Activated B cell treated with CpG ODN at 0.5 μM for 24 hours (primary cell): ENCODE measurements at regions of chr3 and their contacts with region 1.

Region 1: DNA sequence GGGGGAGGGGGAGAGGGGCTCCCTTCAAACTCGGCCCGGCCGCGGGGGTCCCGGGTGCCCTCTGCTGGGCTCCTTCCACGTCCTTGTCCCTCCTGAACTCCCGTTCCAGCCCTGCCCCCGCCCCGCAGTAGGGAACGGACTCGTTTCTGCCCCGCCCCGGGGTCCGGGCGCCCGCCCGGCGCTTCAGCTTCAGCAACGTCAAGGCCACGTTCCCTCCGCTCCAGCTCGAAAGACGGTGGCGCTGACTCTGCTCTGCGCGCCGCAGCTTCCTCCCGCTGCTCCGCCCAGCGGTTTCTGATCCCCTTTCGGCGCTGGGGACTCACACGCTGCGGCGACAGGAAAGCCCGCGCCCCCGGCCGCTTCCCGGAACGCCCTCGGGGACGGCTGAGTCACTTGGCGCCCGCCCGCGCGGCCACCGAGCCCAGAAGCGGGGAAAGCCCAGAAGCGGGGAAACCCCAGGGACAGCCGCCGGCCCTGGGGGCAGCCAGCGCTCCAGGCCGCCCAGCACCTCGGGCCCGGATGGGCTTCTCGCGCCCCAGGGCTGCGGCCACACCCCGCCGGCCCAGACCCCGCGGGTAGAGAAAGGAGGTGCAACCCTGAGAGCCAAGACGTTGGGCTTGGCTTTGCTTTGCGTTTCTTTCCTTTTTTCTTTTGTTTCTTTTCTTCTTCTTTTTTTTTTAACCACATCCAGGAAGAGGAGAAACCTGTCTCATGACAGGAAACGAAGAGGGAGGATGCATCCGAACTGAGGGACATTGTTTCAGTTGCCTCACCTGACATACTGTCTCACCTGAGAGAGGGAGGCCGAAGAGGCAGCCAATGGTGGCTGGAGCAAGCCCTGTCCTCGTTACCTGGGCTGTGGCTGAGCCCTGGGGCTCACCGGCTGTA is 28.9 kb downstream of the ARHGAP31 start:
- DNase-seq: peak; percentile 96
- ATAC-seq: peak; percentile 87
- H3K4me3 Mint-ChIP-seq: peak overlapping the region; percentile 87
- H3K27ac Mint-ChIP-seq: peak overlapping the region; percentile 94
- H3K4me1 Mint-ChIP-seq: peaks cover 59% of the 10 kb centered on the region
- H3K27me3 Mint-ChIP-seq: no peaks in the 10 kb centered on the region
- CTCF ChIP-seq: no peak

Region 2: DNA sequence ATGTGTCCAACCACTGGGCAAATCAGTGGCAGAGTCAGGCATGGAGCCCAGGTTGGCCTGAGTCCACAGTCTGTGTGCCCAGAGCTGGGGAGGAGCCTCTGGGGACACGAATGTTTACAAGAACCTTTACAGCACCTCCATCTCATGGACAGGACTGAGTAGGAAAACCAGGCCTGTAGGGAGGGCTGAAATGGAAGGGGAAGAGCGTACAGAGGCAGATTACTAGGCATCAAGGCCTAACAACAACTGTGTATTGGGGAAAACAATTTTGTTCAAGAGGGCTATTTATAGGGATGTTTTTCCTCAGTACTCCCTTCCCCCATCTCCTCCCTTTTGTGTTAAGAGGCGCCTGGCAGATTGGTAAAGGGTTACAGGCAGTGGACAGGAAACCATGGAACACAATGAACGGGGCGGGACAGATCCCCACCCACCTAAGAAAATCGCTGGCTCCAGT is 44.0 kb before region 1 on chr3:
- CTCF ChIA-PET with region 1: no interaction called
- POLR2A ChIA-PET with region 1: no interaction called
- intact Hi-C with region 1: loop called (anchors 5 kb)
- DNase-seq: no peak
- ATAC-seq: no peak
- H3K4me3 Mint-ChIP-seq: no peak overlapping the region
- H3K27ac Mint-ChIP-seq: no peak overlapping the region
- H3K4me1 Mint-ChIP-seq: peaks cover 3% of the 10 kb centered on the region
- H3K27me3 Mint-ChIP-seq: no peaks in the 10 kb centered on the region
- CTCF ChIP-seq: no peak

Region 3: DNA sequence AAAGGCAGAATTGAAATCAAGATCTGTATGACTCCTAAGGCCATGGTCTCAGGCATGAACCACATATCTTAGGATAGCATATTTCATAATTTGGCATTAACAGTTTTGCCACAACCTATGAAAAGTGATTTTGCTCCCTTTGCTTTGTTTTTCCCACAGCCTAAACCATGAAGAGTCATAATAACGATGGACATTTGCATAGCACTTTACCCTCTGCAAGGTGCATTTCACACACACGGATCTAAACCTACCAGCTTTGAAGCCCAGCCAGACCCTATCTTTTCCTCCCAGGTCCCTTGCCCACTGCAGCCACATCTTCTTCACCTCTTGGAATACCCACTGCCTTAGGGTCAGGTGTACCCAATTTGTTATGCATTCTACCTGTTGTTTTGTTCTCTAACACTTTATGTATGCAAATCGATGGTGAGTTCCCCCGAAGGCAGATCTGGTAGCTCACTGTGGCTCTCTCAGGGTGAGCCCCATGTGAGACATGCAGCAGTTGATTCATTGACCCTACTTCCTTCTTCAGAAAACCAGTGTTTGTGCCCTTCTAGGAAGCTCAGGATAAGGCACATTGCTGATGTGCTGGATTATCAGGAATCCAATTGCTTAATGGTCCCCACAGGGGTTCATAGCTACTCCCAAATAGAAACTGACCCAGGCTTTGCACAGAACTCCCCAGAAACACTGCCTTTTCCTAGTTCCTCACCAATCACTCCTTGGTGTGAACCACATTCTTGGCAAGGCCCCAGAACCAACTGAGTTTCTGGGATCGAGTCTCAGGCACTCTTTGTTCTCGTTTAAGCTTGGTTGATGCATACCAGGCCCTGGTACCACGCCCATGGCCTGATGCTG is 20.2 kb before region 1 on chr3:
- CTCF ChIA-PET with region 1: interaction called, 4 read pairs
- POLR2A ChIA-PET with region 1: interaction called, 13 read pairs
- intact Hi-C with region 1: no loop called
- DNase-seq: no peak
- ATAC-seq: peak; percentile 69
- H3K4me3 Mint-ChIP-seq: peak overlapping the region; percentile 11
- H3K27ac Mint-ChIP-seq: peak overlapping the region; percentile 78
- H3K4me1 Mint-ChIP-seq: peaks cover 51% of the 10 kb centered on the region
- H3K27me3 Mint-ChIP-seq: no peaks in the 10 kb centered on the region
- CTCF ChIP-seq: no peak

Region 4: GRCh38 chr3:119352849-119353502 is 29.9 kb after region 1 on chr3:
- CTCF ChIA-PET with region 1: interaction called, 4 read pairs
- POLR2A ChIA-PET with region 1: interaction called, 20 read pairs
- intact Hi-C with region 1: loop called (anchors 1 kb)
- DNase-seq: no peak
- ATAC-seq: peak; percentile 46
- H3K4me3 Mint-ChIP-seq: peak overlapping the region; percentile 41
- H3K27ac Mint-ChIP-seq: peak overlapping the region; percentile 47
- H3K4me1 Mint-ChIP-seq: peaks cover 47% of the 10 kb centered on the region
- H3K27me3 Mint-ChIP-seq: no peaks in the 10 kb centered on the region
- CTCF ChIP-seq: no peak

Region 5: GRCh38 chr3:119376758-119377157 is 53.7 kb after region 1 on chr3:
- CTCF ChIA-PET with region 1: no interaction called
- POLR2A ChIA-PET with region 1: no interaction called
- intact Hi-C with region 1: no loop called
- DNase-seq: no peak
- ATAC-seq: no peak
- H3K4me3 Mint-ChIP-seq: no peak overlapping the region
- H3K27ac Mint-ChIP-seq: no peak overlapping the region
- H3K4me1 Mint-ChIP-seq: peaks cover 10% of the 10 kb centered on the region
- H3K27me3 Mint-ChIP-seq: no peaks in the 10 kb centered on the region
- CTCF ChIP-seq: no peak

Region 6: GRCh38 chr3:119498186-119498987 is 175.3 kb after region 1 on chr3 and contains the start of gene TIMMDC1:
- CTCF ChIA-PET with region 1: no interaction called
- POLR2A ChIA-PET with region 1: interaction called, 9 read pairs
- intact Hi-C with region 1: loop called (anchors 1 kb)
- DNase-seq: peak; percentile 96
- ATAC-seq: peak; percentile 98
- H3K4me3 Mint-ChIP-seq: peak within 1 kb of the TSS; percentile 99
- H3K27ac Mint-ChIP-seq: peak within 1 kb of the TSS; percentile 97
- H3K4me1 Mint-ChIP-seq: peaks cover 38% of the 10 kb centered on the region
- H3K27me3 Mint-ChIP-seq: no peaks in the 10 kb centered on the region
- CTCF ChIP-seq: no peak
- total RNA-seq, gene TIMMDC1: 73.0 and 76.1 TPM in 2 replicates

Region 7: GRCh38 chr3:119702530-119703157 is 379.6 kb after region 1 on chr3 and contains the start of gene CFAP91:
- CTCF ChIA-PET with region 1: no interaction called
- POLR2A ChIA-PET with region 1: no interaction called
- intact Hi-C with region 1: loop called (anchors 1 kb)
- DNase-seq: peak; percentile 86
- ATAC-seq: peak; percentile 92
- H3K4me3 Mint-ChIP-seq: peak within 1 kb of the TSS; percentile 86
- H3K27ac Mint-ChIP-seq: peak within 1 kb of the TSS; percentile 72
- H3K4me1 Mint-ChIP-seq: peaks cover 52% of the 10 kb centered on the region
- H3K27me3 Mint-ChIP-seq: no peaks in the 10 kb centered on the region
- CTCF ChIP-seq: no peak
- total RNA-seq, gene CFAP91: 8.5 and 12.9 TPM in 2 replicates